ENCODE measurements at regions of chr1 and their contacts with region 1.

Region 1: DNA sequence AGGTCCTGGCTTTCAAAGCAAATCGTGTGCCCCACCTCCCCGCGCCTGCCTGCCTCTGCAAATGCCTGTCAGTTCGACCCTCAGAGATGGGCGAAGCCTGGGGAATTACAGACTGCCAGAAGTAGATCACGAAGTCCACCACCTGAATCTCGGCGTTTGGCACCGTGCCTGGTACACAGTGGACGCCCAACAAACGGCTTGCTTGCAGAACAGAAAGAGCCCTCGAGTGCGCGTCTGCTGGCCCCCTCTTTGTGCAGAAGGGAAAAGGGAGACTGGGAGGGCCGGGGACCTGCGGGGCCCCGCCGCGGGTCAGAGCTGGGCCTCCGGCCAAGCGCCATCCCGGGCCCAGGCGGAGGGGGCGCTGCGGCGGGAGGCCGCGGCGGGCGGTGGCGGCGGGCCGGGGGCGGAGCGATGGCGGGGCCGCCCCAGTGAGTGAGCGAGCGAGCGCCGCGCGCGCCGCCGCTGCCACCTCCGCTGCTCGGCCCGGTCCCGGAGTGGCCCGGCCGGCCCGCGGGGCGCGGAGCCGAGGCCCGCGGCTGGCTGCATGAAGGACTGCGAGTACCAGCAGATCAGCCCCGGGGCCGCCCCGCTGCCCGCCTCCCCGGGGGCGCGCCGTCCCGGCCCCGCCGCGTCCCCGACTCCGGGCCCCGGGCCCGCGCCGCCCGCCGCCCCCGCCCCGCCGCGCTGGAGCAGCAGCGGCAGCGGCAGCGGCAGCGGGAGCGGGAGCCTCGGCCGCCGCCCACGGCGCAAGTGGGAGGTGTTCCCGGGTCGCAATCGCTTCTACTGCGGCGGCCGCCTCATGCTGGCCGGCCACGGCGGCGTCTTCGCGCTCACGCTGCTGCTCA is at the start of gene ZDHHC18:
- DNase-seq: peak; percentile 67
- H3K4me3 Mint-ChIP-seq: peak within 1 kb of the TSS; percentile 92
- H3K27ac Mint-ChIP-seq: peak within 1 kb of the TSS; percentile 93
- H3K4me1 Mint-ChIP-seq: peaks cover 37% of the 10 kb centered on the region
- H3K27me3 Mint-ChIP-seq: no peaks in the 10 kb centered on the region
- total RNA-seq, gene ZDHHC18: 62.7 and 64.3 TPM in 2 replicates

Region 2: DNA sequence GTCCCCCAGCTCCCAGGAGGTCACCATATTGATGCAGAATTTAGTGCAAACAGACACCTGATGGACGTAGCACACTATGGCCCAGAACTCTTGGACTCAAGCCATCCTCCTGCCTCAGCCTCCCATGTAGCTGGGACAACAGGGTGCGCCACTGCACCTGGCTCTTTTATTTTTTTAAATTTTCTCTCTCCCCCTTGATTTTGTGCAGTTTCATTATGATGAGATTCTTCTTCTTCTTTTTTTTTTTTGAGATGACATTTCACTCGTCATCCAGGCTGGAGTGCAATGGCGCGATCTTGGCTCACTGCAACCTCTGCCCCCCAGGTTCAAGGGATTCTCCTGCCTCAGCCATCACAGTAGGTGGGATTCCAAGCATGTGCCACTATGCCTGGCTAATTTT is 233.1 kb before region 1 on chr1:
- intact Hi-C with region 1: no loop called
- DNase-seq: no peak
- H3K4me3 Mint-ChIP-seq: no peak overlapping the region
- H3K27ac Mint-ChIP-seq: no peak overlapping the region
- H3K4me1 Mint-ChIP-seq: peaks cover 5% of the 10 kb centered on the region
- H3K27me3 Mint-ChIP-seq: no peaks in the 10 kb centered on the region

Region 3: DNA sequence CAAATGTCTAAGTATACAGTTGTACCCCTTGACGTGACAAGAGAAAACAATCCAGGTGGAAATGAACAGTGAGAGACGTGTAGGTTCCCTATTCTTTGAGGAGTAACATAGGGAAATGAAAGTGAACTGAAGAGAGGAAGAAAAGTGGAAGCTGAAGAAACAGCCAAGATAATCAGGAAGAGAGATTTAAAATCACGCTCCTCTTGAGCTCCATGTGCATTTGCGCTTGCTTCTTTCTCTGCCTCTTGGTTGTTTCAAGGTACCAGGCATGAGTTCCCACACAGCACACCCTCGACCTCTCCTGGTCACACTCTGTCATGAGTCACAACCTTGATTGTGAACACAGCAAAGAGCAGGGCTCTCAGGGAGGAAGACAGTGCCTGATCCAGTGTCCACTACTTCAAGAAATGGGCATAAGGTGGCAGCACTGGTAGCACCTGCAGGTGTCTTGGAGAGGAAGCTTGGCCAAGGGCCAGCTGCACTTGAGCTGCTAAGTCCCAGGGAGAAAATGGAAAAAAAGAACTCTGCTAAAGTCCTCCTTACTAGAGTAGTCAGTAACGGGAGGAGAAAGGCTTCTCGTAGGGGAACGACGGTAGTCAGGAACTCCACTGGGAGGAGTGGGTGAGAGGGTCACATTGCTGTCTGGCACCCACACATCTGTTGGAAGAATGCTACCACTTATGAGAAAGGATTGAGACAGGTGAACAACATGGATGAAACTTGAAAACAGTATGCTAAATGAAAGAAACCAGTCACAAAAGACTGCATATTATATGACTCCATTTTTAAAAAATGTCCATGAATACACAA is 149.0 kb before region 1 on chr1:
- intact Hi-C with region 1: no loop called
- DNase-seq: peak; percentile 34
- H3K4me3 Mint-ChIP-seq: no peak overlapping the region
- H3K27ac Mint-ChIP-seq: no peak overlapping the region
- H3K4me1 Mint-ChIP-seq: peaks cover 16% of the 10 kb centered on the region
- H3K27me3 Mint-ChIP-seq: no peaks in the 10 kb centered on the region

Region 4: DNA sequence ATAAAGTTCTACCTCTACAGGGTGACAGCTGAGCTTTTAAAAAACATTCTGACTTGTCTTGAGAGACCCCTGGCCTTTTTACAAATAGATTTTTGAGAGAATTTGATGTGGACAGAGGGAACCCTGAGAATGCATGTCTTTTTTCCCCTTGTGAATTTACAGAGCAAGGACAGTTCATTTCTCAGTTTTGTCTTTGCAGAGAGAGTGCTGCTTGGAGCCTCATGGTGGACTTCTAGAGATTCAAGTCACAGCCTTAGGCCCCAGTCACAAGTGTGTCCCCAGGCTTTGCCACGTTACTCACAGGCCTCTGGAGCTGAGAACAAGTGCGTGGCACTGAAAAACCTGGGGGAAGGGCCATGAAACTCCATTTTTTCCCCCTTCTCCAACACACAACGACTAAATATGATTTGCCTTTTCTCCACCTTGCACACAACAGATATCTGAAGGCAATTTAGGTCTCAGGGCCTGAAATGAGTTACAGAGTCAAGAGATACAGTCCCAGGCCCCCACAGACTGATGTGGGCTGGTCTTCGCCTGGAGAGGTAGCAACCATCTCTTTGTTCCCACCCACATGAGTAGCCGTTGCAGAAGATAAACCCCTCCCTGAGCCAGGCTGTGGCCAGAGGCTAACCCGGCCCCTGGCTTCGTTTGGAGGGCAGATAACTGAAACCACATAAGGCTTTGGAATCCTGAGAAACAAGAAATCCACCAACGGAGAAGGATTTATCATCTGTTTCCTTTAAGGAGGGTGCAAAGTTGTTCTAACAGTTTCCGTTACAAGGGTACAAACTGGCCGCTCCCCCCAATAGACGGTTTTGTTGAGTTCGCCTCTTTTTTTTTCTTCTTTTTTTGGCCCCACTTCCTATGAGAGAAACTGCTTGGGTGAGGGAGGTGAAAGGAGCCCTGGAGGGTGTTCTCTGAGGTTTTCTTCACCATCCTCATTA is 39.8 kb before region 1 on chr1:
- intact Hi-C with region 1: no loop called
- DNase-seq: no peak
- H3K4me3 Mint-ChIP-seq: peak overlapping the region; percentile 98
- H3K27ac Mint-ChIP-seq: peak overlapping the region; percentile 100
- H3K4me1 Mint-ChIP-seq: peaks cover 62% of the 10 kb centered on the region
- H3K27me3 Mint-ChIP-seq: no peaks in the 10 kb centered on the region

Region 5: DNA sequence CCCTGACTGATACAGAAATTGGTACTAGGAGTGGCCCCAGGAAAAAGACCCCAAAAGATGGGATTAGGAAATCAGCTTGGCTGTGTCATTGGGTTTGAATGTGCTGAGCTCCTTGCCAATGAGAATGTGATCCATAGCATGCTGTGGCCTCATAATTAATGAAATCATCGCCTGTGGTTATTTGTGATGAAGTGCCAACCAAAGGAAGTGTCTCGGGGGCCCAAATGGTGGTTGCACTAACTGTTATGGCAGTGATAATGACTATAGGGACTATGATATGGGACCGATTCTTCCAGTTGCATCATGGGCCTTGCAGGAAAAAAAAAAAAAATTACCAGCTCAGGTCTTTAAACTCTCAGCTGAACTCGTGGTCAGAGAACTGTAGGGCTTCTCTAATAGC is 15.4 kb before region 1 on chr1:
- intact Hi-C with region 1: loop called (anchors 2 kb)
- DNase-seq: no peak
- H3K4me3 Mint-ChIP-seq: no peak overlapping the region
- H3K27ac Mint-ChIP-seq: no peak overlapping the region
- H3K4me1 Mint-ChIP-seq: peaks cover 17% of the 10 kb centered on the region
- H3K27me3 Mint-ChIP-seq: no peaks in the 10 kb centered on the region